Activated CD8-positive, alpha-beta T cell treated with anti-CD3 and anti-CD28 coated beads for 36 hours (primary cell): ENCODE measurements at regions of chr12 and their contacts with region 1.

Region 1: DNA sequence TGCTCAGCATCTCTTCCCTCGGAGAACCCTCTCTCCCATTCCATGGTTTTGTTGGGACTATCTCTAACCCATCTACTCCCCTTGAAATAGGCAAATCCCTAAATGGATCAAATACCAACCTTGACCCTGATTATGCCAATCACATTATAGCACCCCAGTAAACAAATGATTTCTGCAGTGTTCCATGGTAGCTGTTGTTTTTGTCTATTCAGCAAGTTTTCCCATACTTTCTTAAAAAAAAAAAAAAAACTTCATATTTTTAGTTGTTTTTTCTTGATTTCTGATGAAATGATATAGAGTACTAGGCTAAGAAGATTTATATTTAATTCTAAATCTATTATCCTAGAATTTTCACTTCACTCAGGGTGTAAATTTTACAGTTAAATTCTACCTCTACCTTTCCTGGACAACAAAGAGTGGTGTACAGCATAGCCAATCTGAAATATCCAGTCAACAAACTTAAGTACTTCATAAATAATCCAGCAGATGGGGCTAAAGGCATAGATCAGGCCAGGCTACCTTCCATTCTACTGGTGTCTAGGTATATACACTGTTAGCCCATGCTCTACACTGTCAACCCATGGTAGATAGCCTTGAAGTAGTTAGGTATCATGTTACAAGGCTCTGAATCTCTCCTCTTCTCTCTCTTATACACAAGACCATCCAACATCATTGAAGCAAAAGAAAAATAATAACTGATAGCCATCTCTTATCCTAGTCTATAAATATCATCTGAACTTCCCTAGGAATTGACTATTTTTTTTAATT is 82.2 kb downstream of the PLEKHG7 start:
- DNase-seq: peak; percentile 30
- ATAC-seq: peak; percentile 99
- H3K4me3 Mint-ChIP-seq: no peak overlapping the region
- H3K27ac Mint-ChIP-seq: peak overlapping the region; percentile 21
- H3K4me1 Mint-ChIP-seq: peaks cover 3% of the 10 kb centered on the region
- H3K27me3 Mint-ChIP-seq: no peaks in the 10 kb centered on the region
- CTCF ChIP-seq: peak; percentile 61

Region 2: DNA sequence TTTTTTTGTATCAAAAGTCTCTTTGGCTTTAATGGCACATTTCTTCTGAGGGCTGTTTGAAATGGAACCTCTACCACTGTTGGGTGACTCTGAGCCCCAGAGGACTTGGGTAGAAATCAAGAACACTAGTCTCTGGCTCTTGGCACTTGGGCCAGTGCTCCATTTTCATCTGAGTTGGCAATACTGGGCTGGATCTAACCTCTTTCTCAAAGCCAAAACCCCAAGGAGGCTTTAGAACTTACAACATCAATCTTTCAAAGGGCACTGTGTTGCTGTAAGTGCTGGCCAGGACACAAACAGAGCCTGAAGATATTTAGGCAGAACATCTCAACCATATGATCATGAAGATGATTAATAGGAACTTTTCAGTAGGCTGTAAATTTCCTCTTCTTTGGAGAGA is 116.2 kb before region 1 on chr12:
- CTCF ChIA-PET with region 1: no interaction called
- POLR2A ChIA-PET with region 1: no interaction called
- intact Hi-C with region 1: no loop called
- DNase-seq: no peak
- ATAC-seq: no peak
- H3K4me3 Mint-ChIP-seq: no peak overlapping the region
- H3K27ac Mint-ChIP-seq: no peak overlapping the region
- H3K4me1 Mint-ChIP-seq: no peaks in the 10 kb centered on the region
- H3K27me3 Mint-ChIP-seq: peaks cover 3% of the 10 kb centered on the region
- CTCF ChIP-seq: no peak

Region 3: GRCh38 chr12:92729773-92730305 is 55.1 kb before region 1 on chr12:
- CTCF ChIA-PET with region 1: no interaction called
- POLR2A ChIA-PET with region 1: no interaction called
- intact Hi-C with region 1: no loop called
- DNase-seq: no peak
- ATAC-seq: no peak
- H3K4me3 Mint-ChIP-seq: no peak overlapping the region
- H3K27ac Mint-ChIP-seq: no peak overlapping the region
- H3K4me1 Mint-ChIP-seq: no peaks in the 10 kb centered on the region
- H3K27me3 Mint-ChIP-seq: peaks cover 2% of the 10 kb centered on the region
- CTCF ChIP-seq: no peak

Region 4: GRCh38 chr12:92796650-92797049 is 11.7 kb after region 1 on chr12:
- CTCF ChIA-PET with region 1: interaction called, 10 read pairs
- POLR2A ChIA-PET with region 1: no interaction called
- intact Hi-C with region 1: no loop called
- DNase-seq: no peak
- ATAC-seq: no peak
- H3K4me3 Mint-ChIP-seq: no peak overlapping the region
- H3K27ac Mint-ChIP-seq: no peak overlapping the region
- H3K4me1 Mint-ChIP-seq: peaks cover 2% of the 10 kb centered on the region
- H3K27me3 Mint-ChIP-seq: no peaks in the 10 kb centered on the region
- CTCF ChIP-seq: no peak

Region 5: GRCh38 chr12:93390549-93391297 is 605.7 kb after region 1 on chr12:
- CTCF ChIA-PET with region 1: no interaction called
- POLR2A ChIA-PET with region 1: no interaction called
- intact Hi-C with region 1: loop called (anchors 10 kb)
- DNase-seq: no peak
- ATAC-seq: no peak
- H3K4me3 Mint-ChIP-seq: no peak overlapping the region
- H3K27ac Mint-ChIP-seq: peak overlapping the region; percentile 36
- H3K4me1 Mint-ChIP-seq: peaks cover 48% of the 10 kb centered on the region
- H3K27me3 Mint-ChIP-seq: no peaks in the 10 kb centered on the region
- CTCF ChIP-seq: no peak